ENCODE measurements at regions of chr17 and their contacts with region 1.

Region 1: DNA sequence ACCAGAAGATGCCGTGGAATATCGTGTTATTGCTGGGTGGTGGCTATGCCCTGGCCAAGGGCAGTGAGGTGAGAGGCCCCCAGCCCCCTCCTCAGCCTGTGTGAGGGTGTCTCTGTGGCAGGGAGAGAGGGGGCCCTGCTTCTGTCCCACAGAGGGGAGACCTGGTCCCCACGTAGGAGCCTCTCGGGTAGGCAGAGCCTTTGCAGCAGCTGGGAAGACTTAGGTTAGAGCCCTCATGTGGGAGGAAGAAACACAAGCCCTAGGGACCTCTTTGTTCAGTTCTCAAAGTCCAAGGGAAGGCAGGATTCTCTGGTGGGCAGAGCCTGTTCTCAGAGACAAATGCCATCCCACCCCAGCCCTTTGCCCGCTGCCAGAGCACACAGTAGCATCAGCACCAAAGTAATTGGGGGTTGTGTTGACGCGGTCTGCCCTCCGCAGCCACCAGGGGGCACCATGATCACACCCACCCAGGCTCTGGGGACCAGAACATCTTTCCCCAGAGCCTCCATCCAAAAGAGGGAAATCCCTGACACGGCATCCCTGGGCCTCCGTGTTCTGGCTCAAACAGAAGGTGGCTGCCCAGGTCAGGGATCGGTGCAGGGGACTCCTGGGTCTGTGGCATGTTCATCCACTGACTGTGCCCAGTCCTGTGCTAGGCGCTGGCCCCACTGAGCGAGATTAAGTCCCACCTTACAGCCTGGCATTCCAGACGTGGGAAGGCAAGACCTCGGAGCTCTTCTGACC is 11.5 kb upstream of the FOXN1 start:
- DNase-seq: peak; percentile 93
- H3K4me3 Mint-ChIP-seq: no peak overlapping the region
- H3K27ac Mint-ChIP-seq: no peak overlapping the region
- H3K4me1 Mint-ChIP-seq: peaks cover 2% of the 10 kb centered on the region
- H3K27me3 Mint-ChIP-seq: peaks cover 8% of the 10 kb centered on the region

Region 2: DNA sequence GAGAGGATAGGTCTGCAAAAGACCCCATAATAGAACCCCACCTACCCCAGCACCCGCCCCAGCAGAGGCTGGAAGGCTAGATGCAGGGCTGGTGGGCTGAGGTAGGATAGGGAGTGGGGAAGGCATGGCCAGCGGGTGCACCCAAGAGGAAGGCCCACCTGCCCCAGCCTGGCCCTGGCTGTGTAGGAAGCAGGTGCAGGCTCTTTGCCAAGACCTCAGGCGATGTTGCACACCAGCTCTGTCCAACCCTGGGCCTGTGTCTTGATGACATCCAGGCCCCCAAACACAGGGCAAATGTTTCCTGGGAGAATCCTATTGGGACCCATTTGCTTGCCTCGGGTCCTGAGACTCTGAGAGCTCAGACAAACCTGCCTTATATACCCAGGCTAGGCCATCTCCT is 45.6 kb after region 1 on chr17:
- intact Hi-C with region 1: loop called (anchors 1 kb)
- DNase-seq: no peak
- H3K4me3 Mint-ChIP-seq: no peak overlapping the region
- H3K27ac Mint-ChIP-seq: no peak overlapping the region
- H3K4me1 Mint-ChIP-seq: no peaks in the 10 kb centered on the region
- H3K27me3 Mint-ChIP-seq: no peaks in the 10 kb centered on the region

Region 3: DNA sequence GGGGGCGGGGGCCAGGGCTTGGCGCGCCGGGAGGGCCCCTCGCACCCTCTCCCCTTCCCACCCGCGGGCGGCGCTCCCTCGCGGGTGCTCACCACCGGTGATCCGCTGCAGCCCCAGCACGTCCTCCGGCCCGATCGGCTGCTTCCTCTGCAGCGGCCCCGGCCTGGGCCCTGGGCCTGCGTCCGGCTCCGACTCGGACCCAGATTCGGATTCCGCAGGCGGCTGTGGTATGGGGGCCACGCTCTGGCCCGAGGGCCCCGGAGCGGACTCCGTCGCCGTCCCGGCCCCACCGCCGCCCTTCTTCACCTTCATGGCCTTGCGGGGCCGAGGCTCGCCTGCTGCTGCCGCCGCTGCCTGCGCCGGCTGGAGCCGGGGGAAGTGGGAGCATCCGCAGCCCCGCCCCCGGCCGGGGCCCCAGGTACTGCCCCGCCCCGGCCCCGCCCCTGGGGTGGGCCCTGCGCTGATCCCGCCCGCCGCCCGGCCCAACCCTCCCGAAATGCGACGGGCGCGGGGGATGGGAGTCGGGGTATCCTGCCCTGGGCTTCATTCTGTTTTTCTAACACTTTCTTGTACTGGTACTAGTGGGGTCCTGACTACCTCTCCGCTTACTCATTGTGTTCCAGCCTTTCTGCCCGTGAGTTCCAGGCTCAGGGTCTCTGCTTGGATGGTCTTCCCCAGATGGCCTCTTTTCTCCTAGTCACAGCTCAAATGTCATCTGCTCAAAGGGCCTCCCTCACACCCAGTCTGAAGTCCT is 57.8 kb after region 1 on chr17 and contains the start of gene UNC119:
- intact Hi-C with region 1: loop called (anchors 2 kb)
- DNase-seq: peak; percentile 94
- H3K4me3 Mint-ChIP-seq: peak within 1 kb of the TSS; percentile 96
- H3K27ac Mint-ChIP-seq: peak within 1 kb of the TSS; percentile 90
- H3K4me1 Mint-ChIP-seq: peaks cover 53% of the 10 kb centered on the region
- H3K27me3 Mint-ChIP-seq: no peaks in the 10 kb centered on the region
- total RNA-seq, gene UNC119: 59.8 and 60.2 TPM in 2 replicates

Region 4: GRCh38 chr17:28612936-28613872 is 118.6 kb after region 1 on chr17:
- intact Hi-C with region 1: loop called (anchors 1 kb)
- DNase-seq: peak; percentile 80
- H3K4me3 Mint-ChIP-seq: no peak overlapping the region
- H3K27ac Mint-ChIP-seq: no peak overlapping the region
- H3K4me1 Mint-ChIP-seq: peaks cover 4% of the 10 kb centered on the region
- H3K27me3 Mint-ChIP-seq: no peaks in the 10 kb centered on the region

Region 5: GRCh38 chr17:28896884-28897768 is 402.5 kb after region 1 on chr17 and contains the start of gene FLOT2:
- intact Hi-C with region 1: no loop called
- DNase-seq: peak; percentile 89
- H3K4me3 Mint-ChIP-seq: peak within 1 kb of the TSS; percentile 97
- H3K27ac Mint-ChIP-seq: peak within 1 kb of the TSS; percentile 98
- H3K4me1 Mint-ChIP-seq: peaks cover 64% of the 10 kb centered on the region
- H3K27me3 Mint-ChIP-seq: no peaks in the 10 kb centered on the region
- total RNA-seq, gene FLOT2: 109 and 111 TPM in 2 replicates

Measured in activated CD4-positive, alpha-beta T cell treated with anti-CD3 and anti-CD28 coated beads, Interleukin-2, amount 10 ng/mL, durations not matched to agents 24 days and 14 days (primary cell).